Natural killer cell (primary cell): ENCODE measurements at regions of chr19 and their contacts with region 1.

Region 1: DNA sequence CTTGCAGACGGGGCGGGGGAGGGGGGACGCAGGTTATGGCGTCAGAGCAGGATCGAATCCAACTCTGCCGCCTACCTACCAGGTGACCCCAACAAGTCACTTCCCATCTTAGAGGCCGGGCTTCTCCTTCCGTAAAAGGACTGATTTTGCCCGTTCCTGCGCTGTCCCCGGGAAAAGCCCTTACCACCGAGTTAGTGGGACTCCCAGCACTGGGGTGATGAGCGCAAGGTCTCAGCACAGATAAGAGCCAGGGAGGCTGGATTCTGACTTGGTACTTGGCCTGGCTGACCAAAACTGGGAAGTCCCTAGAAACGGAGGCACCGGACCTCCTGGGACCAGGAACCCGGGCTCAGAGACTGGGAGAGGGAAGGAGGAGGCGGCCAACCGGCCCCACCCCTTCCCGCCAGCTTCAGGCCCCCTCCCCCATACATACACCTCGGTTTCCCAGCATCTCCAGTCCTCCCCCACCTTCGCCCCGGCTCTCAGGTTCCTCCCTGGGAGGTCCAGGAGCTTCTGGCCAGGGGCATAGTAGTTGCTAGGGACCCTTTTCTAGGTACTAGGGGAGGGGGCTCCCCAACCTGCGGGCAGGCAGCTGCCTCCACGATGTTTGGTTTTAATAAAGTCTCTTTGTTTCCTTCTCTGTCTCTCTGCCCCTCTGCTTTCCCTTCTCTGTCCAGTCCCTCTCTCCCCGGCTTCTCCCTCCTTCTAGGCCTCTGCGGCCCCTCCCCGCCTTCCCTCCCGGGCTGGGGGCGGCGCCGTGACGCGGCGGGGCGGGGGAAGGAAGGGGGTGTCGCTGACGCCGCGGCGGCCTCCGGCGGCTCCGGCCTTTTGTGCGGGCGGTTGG is at the start of gene GRAMD1A:
- DNase-seq: peak; percentile 69 to 81
- ATAC-seq: peak; percentile 69 to 77 (median 77)
- H3K4me3 ChIP-seq: peak within 1 kb of the TSS; percentile 55
- H3K4me3 Mint-ChIP-seq: peak within 1 kb of the TSS; percentile 95
- H3K27ac ChIP-seq: peak within 1 kb of the TSS; percentile 94
- H3K27ac Mint-ChIP-seq: peak within 1 kb of the TSS; percentile 83 to 93
- H3K4me1 ChIP-seq: peaks cover 82% of the 10 kb centered on the region
- H3K4me1 Mint-ChIP-seq: peaks cover 49 to 68% of the 10 kb centered on the region in 2 donors
- H3K27me3 ChIP-seq: no peaks in the 10 kb centered on the region
- H3K27me3 Mint-ChIP-seq: no peaks in the 10 kb centered on the region
- CTCF ChIP-seq: no peak
- total RNA-seq, gene GRAMD1A: 57.6 to 80.3 (median 66.6) TPM

Region 2: DNA sequence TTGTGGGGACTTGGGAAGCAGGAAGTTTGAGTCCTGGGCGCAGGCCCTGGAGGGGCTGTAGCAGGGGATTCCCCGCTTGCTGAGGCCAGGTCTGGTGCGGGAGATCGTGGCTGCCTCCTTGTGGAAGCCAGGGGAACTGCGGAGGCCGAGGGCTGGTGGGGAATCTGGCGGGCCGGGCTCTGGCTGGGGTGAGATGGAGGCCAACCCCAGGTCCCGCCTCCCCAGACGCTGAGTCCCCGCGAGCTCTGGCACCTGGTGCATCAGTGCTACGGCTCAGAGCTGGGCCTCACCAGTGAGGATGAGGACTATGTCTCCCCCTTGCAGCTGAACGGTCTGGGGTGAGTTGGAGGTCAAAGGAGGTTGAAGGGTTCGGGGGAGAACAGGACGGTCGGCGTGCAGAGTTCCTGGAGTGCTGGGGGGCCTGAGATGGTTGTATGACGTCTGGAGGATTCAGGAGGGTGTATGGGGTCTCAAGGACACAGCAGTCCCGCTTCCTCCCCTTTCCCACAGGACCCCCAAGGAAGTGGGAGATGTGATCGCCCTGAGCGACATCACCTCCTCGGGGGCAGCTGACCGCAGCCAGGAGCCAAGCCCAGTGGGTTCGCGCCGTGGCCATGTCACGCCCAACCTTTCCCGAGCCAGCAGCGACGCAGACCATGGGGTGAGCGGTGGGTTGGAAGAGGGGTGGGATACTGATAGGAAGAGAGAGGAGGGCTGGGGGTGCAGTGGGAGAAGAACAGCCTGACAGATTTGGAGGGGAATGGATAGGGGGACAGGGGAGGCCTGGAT is 13.5 kb after region 1 on chr19:
- intact Hi-C with region 1: loop called (anchors 1 kb)
- DNase-seq: peak; percentile 82 to 92
- ATAC-seq: peak; percentile 75 to 81 (median 78)
- H3K4me3 ChIP-seq: no peak overlapping the region
- H3K4me3 Mint-ChIP-seq: peak overlapping the region; percentile 77
- H3K27ac ChIP-seq: peak overlapping the region; percentile 67
- H3K27ac Mint-ChIP-seq: peak overlapping the region; percentile 86 to 98
- H3K4me1 ChIP-seq: peaks cover 75% of the 10 kb centered on the region
- H3K4me1 Mint-ChIP-seq: peaks cover 52 to 65% of the 10 kb centered on the region in 2 donors
- H3K27me3 ChIP-seq: no peaks in the 10 kb centered on the region
- H3K27me3 Mint-ChIP-seq: no peaks in the 10 kb centered on the region
- CTCF ChIP-seq: peak; percentile 98

Region 3: GRCh38 chr19:35040826-35041547 is 41.3 kb after region 1 on chr19:
- intact Hi-C with region 1: no loop called
- DNase-seq: peak; percentile 27 to 42
- ATAC-seq: peak; percentile 53 to 62 (median 55)
- H3K4me3 ChIP-seq: peak overlapping the region; percentile 8
- H3K4me3 Mint-ChIP-seq: peak overlapping the region; percentile 81
- H3K27ac ChIP-seq: peak overlapping the region; percentile 38
- H3K27ac Mint-ChIP-seq: peak overlapping the region in 1 of 2 donors; percentile 69
- H3K4me1 ChIP-seq: peaks cover 49% of the 10 kb centered on the region
- H3K4me1 Mint-ChIP-seq: peaks cover 21 to 45% of the 10 kb centered on the region in 2 donors
- H3K27me3 ChIP-seq: no peaks in the 10 kb centered on the region
- H3K27me3 Mint-ChIP-seq: peaks cover 15 to 23% of the 10 kb centered on the region in 2 donors
- CTCF ChIP-seq: no peak